Endothelial cell of umbilical vein (primary cell): ENCODE measurements at regions of chr16 and their contacts with region 1.

Region 1: GRCh38 chr16:57141822-57142631 is 43.8 kb downstream of the PSME3IP1 start:
- DNase-seq: no peak
- H3K4me3 ChIP-seq: no peak overlapping the region
- H3K27ac ChIP-seq: no peak overlapping the region
- H3K4me1 ChIP-seq: peaks cover 46% of the 10 kb centered on the region
- H3K27me3 ChIP-seq: no peaks in the 10 kb centered on the region
- CTCF ChIP-seq: no peak
- POLR2A ChIP-seq: no peak

Region 2: GRCh38 chr16:57156351-57156703 is 14.3 kb after region 1 on chr16:
- CTCF ChIA-PET with region 1: interaction called, 7 read pairs
- POLR2A ChIA-PET with region 1: no interaction called
- dilution Hi-C with region 1: no loop called
- intact Hi-C with region 1: loop called (anchors 2 kb)
- DNase-seq: peak; percentile 67
- H3K4me3 ChIP-seq: no peak overlapping the region
- H3K27ac ChIP-seq: no peak overlapping the region
- H3K4me1 ChIP-seq: peaks cover 11% of the 10 kb centered on the region
- H3K27me3 ChIP-seq: no peaks in the 10 kb centered on the region
- CTCF ChIP-seq: no peak
- POLR2A ChIP-seq: no peak

Region 3: DNA sequence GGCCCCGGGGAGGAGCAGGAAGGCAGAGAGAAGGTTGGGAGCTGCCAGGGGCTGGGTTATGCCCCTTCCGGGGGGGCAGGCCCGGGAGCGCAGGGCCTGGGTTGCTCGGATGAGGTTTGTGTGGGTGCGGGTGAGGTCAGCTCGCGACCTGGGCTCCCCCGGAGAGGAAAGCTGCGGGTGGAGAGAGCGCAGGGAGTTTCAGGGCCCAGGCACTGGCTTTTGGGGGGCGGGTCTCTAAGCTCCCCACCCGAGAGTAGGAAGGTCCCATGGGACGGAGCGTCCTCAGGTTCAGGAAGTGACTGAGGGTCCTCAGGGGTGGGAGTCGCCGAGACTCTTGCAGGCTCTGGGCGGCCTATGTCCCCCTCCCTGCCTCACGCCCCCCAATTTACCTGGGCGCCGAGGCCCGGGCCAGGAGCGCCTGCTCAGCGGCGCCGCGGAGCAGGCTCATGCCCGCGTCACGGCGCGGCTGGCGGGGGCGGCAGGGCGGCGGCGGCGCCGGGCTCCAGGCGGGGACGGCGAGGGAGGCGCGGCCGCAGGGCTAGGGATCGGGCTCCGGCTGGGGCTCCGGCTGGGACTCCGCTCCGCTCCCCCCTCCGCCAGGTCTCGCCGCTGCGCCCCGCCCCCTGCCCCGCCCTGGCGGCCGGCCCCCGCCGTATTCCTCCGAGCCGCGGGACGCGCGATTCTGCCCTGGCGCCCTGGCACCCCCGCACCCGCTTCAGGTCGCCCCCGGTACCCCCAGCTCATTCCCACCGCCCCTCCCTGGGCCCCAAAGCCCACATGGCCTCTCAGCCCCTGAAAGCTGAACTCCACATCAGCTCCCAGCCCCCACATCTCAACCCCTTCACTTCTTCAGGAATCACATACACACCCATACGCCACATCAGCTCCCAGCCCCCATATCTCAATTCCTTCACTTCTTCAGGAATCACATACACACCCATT is 344.2 kb after region 1 on chr16 and contains the start of gene DOK4:
- CTCF ChIA-PET with region 1: no interaction called
- POLR2A ChIA-PET with region 1: no interaction called
- dilution Hi-C with region 1: no loop called
- intact Hi-C with region 1: no loop called
- DNase-seq: peak; percentile 36
- H3K4me3 ChIP-seq: peak within 1 kb of the TSS; percentile 49 to 72 (median 51)
- H3K27ac ChIP-seq: no peak within 1 kb of the TSS
- H3K4me1 ChIP-seq: peaks cover 6% of the 10 kb centered on the region
- H3K27me3 ChIP-seq: peaks cover 0 to 4% of the 10 kb centered on the region in 2 experiments
- CTCF ChIP-seq: no peak
- POLR2A ChIP-seq: no peak
- total RNA-seq, gene DOK4: 22.3 and 24.4 TPM in 2 replicates